ENCODE measurements at regions of chr5 and their contacts with region 1.

Region 1: DNA sequence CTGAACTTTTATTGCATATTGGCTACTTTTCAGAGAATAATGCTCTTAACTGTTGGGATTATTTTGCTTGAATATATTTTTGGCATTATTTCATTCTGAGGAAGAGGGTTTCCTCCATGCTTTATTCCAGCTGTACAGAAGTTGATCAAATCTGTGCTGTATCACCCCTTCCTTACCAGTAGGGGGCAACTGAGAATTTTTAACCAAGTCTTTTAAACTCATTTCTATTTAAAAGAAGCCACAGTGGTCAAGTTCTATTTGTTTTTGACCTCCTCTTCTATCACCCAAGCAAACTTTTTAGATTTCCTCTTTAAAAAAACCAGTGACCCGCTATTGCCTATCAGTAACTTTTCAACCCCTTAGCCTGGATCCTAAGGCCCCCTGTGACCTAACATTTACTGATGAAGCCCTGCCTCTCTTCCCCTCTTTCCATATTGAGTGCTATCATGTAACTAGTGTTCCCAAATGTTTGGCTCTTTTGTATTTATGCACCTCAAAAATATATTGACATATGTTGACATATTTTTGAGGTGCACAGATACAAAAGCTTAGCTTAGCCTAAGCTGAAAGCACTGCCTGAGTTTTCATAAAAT is 80.6 kb downstream of the FBXO4 start:
- DNase-seq: no peak
- H3K4me3 Mint-ChIP-seq: no peak overlapping the region
- H3K27ac Mint-ChIP-seq: no peak overlapping the region
- H3K4me1 Mint-ChIP-seq: no peaks in the 10 kb centered on the region
- H3K27me3 Mint-ChIP-seq: peaks cover 3% of the 10 kb centered on the region

Region 2: DNA sequence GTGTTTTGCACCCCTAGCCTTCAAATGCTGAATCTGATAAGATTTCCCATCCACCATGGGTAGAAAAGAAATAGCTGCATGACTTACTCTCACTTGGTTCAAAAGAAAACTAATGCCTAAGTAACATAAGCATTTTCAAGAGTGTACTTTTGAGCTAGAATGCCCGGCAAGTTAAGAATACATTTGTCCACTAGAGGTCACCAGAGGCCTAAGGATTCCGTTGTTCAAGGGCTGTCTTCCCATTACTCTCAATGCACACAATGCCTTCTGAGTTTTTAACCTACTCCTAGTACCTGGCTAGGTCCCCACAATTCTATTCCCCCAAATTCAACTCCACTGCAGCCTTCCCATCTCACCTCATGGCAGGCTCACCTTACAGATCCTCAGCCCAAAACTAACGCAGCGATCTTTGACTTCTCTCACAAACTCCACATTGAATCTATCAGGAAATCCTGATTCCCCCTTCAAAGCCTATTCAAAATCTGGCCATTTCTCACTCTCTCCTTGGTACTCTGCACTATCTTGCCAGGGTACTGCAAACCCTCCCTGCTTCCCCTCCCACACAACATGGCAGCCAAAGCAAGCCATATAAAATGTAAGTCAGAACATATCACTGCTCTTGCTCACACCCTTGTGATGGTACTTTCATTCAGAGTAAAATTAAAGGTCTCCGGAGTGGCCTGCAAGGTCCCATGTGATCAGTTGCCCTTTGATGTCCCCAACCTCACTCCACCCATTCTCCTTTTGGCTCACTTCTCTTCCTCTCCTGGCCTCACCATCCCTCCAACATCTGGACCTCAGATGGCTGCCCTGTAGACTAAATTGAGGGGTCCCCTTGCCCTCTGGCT is 148.8 kb before region 1 on chr5:
- CTCF ChIA-PET with region 1: interaction called, 17 read pairs
- DNase-seq: peak; percentile 69
- H3K4me3 Mint-ChIP-seq: no peak overlapping the region
- H3K27ac Mint-ChIP-seq: no peak overlapping the region
- H3K4me1 Mint-ChIP-seq: peaks cover 9% of the 10 kb centered on the region
- H3K27me3 Mint-ChIP-seq: no peaks in the 10 kb centered on the region

Measured in activated naive CD4-positive, alpha-beta T cell treated with anti-CD3 and anti-CD28 coated beads, Interleukin-2, amount 10 ng/mL, durations not matched to agents 7 days and 5 days (primary cell).